Heart right ventricle (tissue), 16 donors: ENCODE measurements at regions of chrX and their contacts with region 1.

Region 1: GRCh38 chrX:40013266-40014195 is 84.2 kb downstream of the BCOR start:
- DNase-seq: peak; percentile 74 to 75
- ATAC-seq: peak; percentile 49 to 78 (median 74)
- H3K4me3 ChIP-seq: peak overlapping the region; percentile 16 to 65 (median 56)
- H3K27ac ChIP-seq: peak overlapping the region; percentile 89 to 98 (median 95)
- H3K4me1 ChIP-seq: peaks cover 0 to 54% (median 26%) of the 10 kb centered on the region in 9 donors
- H3K27me3 ChIP-seq: peaks cover 0 to 78% (median 0%) of the 10 kb centered on the region in 7 donors
- CTCF ChIP-seq: no peak

Region 2: DNA sequence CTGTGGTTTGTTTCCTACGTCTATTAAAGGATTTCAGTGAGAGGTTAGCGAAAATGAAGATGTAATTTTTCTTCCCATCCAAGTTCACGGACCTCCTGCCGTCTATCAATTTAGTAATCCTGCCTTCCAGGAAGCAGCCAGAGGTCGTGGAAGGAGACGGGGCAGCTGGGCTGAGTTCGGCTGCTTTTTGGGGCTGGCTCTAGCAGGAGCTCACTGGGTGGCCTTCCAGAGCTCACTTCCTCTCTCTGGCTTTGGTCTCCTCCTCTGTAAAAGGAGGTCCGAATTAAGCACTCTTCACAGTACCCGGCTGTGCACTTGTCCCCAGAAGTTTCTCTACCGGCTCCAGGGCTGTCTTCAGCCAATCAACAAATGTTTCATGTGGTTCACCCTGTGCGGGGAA is 211.2 kb before region 1 on chrX:
- intact Hi-C with region 1: no loop called
- DNase-seq: no peak
- ATAC-seq: peak in 4 of 8 donors; percentile 44 to 59 (median 55)
- H3K4me3 ChIP-seq: no peak overlapping the region
- H3K27ac ChIP-seq: no peak overlapping the region
- H3K4me1 ChIP-seq: no peaks in the 10 kb centered on the region
- H3K27me3 ChIP-seq: peaks cover 0 to 19% (median 0%) of the 10 kb centered on the region in 7 donors
- CTCF ChIP-seq: no peak

Region 3: DNA sequence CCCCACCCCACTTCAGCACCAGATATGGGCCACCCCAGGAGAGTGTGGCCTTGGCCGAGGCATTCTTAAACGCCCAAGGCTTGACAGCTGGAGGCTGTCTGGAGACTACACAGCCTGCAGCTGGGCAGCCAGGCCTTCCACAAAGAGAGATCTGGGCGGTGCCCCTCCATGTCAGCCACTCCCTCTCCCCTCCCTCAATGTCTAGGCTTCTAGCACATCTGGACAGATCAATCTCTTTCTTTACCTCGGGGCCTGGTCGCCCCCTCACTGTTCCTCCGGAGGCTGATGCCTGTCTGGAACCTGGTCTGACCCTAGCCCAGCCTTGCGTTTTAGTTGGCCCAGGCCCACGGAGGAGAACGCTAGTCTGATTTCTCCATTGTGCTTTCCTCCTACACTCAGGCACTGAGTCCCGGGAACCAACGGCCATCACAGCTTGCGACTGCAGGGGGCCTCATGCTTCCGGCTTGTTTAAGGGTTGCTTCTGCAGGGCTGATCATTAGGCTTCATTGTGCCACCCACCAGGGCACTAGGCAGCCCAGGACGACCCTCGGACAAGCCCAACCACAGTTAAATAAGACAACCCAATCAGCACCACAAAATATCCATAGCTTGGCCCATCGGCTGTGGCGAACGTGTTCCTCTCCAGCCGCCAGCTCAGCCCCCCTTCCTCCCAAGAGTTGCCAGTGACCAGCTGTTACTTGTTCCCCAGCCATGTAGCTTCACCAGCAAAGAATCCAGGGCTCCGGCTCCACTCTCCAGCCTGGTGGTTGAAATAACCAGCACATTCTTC is 116.4 kb before region 1 on chrX:
- intact Hi-C with region 1: loop called in 4 of 10 experiments (anchors 10 kb)
- DNase-seq: peak; percentile 20 to 33
- ATAC-seq: peak; percentile 46 to 77 (median 65)
- H3K4me3 ChIP-seq: no peak overlapping the region
- H3K27ac ChIP-seq: peak overlapping the region in 8 of 10 donors; percentile 1 to 64 (median 37)
- H3K4me1 ChIP-seq: peaks cover 3 to 41% (median 17%) of the 10 kb centered on the region in 9 donors
- H3K27me3 ChIP-seq: peaks cover 0 to 33% (median 0%) of the 10 kb centered on the region in 7 donors
- CTCF ChIP-seq: peak in 4 of 9 donors; percentile 12 to 31 (median 20)

Region 4: DNA sequence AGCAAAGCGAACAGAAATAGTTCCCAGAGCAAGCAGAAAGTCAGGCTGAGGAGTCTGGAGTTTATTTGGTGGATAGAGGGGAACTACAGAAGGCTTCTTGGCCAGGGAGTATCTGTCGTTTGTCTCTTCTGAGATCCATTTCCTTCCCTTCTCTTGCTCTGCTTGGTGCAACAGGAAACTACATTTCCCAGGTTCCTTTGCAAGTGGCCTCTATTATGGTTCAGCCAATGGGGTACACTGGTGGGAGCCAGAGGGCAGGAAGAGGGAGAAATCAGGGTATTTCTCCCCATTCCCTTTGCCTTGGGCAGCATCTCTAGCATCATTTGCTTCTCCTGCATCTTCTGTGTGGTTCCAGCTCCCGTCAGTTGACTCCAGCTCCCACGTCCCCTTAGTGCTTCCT is 57.9 kb before region 1 on chrX:
- intact Hi-C with region 1: loop called in 1 of 10 experiments (anchors 5 kb)
- DNase-seq: no peak
- ATAC-seq: no peak
- H3K4me3 ChIP-seq: no peak overlapping the region
- H3K27ac ChIP-seq: no peak overlapping the region
- H3K4me1 ChIP-seq: peaks cover 0 to 22% (median 5%) of the 10 kb centered on the region in 9 donors
- H3K27me3 ChIP-seq: peaks cover 0 to 7% (median 0%) of the 10 kb centered on the region in 7 donors
- CTCF ChIP-seq: no peak

Region 5: DNA sequence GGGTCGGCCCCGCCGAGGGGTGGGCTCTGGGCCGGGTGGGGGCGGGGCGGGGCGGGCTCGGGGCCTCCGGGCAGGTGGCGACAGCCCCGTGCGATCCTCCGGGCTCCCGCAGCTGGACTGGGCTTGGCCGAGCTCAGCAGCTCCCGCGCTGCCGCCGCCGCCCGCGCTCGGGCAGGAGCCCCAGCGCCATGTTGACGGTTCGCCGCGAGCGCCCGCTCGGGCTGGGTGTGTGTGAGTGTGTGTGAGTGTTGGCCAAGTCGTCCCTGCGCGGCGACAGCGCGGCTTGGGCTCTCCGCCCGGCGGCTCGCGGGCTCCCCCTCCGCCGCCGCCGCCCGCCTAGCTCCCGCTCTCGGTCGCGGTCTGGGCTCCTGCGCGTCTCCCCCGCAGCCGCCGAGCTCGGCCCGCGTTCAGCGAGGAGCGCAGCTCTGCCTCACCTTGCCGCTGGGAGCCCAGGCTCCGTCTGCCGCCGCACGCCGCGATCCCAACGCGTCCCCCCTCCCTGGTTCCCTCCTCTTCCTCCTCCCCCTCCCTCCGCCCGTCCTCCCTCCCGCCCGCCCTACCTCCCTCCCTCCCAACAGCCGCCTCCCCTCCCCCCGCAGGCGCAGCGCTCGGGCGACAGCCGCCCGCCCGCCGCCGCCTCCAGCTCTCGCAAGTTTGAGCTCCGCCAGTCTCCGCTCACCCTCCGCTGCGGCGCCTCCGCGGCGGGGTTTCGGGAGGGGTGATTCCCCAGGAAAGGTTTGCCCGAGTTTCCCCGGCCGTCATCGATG is 84.1 kb after region 1 on chrX and contains the start of gene BCOR:
- intact Hi-C with region 1: loop called in 5 of 10 experiments (anchors 5 to 10 kb)
- DNase-seq: peak; percentile 72 to 80
- ATAC-seq: peak; percentile 26 to 63 (median 56)
- H3K4me3 ChIP-seq: peak within 1 kb of the TSS; percentile 70 to 88 (median 82)
- H3K27ac ChIP-seq: peak within 1 kb of the TSS; percentile 84 to 94 (median 92)
- H3K4me1 ChIP-seq: peaks cover 0 to 40% (median 17%) of the 10 kb centered on the region in 9 donors
- H3K27me3 ChIP-seq: peaks cover 0 to 99% (median 0%) of the 10 kb centered on the region in 7 donors
- CTCF ChIP-seq: peak in 1 of 9 donors; percentile 20
- total RNA-seq, gene BCOR: 12.4 to 27.2 (median 19.9) TPM

Region 6: GRCh38 chrX:40146262-40147125 is 133.0 kb after region 1 on chrX:
- intact Hi-C with region 1: loop called in 5 of 10 experiments (anchors 5 to 10 kb)
- DNase-seq: peak in 1 of 2 donors; percentile 22
- ATAC-seq: peak; percentile 41 to 57 (median 47)
- H3K4me3 ChIP-seq: peak overlapping the region; percentile 35 to 65 (median 54)
- H3K27ac ChIP-seq: peak overlapping the region in 6 of 10 donors; percentile 35 to 74 (median 53)
- H3K4me1 ChIP-seq: peaks cover 0 to 61% (median 35%) of the 10 kb centered on the region in 9 donors
- H3K27me3 ChIP-seq: peaks cover 0 to 91% (median 0%) of the 10 kb centered on the region in 7 donors
- CTCF ChIP-seq: no peak

Region 7: GRCh38 chrX:40175511-40176350 is 162.2 kb after region 1 on chrX:
- intact Hi-C with region 1: loop called in 2 of 10 experiments (anchors 5 kb)
- DNase-seq: peak; percentile 75 to 77
- ATAC-seq: peak; percentile 48 to 75 (median 59)
- H3K4me3 ChIP-seq: peak overlapping the region; percentile 47 to 70 (median 63)
- H3K27ac ChIP-seq: peak overlapping the region; percentile 90 to 99 (median 98)
- H3K4me1 ChIP-seq: peaks cover 0 to 60% (median 22%) of the 10 kb centered on the region in 9 donors
- H3K27me3 ChIP-seq: peaks cover 0 to 82% (median 0%) of the 10 kb centered on the region in 7 donors
- CTCF ChIP-seq: no peak